ENCODE measurements at regions of chr19 and their contacts with region 1.

Region 1: DNA sequence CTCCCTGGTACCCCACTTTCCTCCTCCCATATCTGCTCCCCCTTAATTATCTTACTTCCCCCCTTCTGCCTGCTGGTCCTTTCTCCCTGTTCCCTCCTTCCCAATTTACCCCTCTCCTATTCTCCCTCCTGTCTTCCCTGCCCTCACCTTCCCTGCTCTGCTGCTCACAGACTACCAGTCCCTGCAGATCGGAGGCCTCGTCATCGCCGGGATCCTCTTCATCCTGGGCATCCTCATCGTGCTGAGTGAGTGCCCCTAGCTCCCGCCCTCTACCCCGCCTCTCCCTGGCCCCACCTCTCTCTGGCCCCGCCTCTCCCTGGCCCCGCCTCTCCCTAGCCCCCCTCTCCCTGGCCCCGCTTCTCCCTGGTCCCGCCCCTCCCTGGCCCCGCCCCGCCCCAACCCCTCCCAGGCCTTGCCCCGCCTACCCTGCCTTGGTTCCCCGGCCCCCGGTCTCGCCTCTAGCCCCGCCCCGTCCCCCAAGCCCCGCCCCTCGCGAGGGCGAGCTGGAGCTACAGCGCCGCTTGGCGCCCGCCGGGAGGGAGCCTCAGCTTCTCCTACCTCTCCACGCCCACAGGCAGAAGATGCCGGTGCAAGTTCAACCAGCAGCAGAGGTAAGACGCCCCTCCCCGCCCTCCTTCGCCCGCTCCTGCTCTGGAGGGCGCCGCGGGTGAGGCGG is 2.0 kb upstream of the FXYD7 start:
- DNase-seq: peak; percentile 78
- H3K4me3 ChIP-seq: peak overlapping the region; percentile 29; the same call in 1 of the 2 replicates
- H3K27ac ChIP-seq: no peak overlapping the region
- H3K27me3 ChIP-seq: peaks cover 25% of the 10 kb centered on the region
- CTCF ChIP-seq: peak; percentile 45

Region 2: DNA sequence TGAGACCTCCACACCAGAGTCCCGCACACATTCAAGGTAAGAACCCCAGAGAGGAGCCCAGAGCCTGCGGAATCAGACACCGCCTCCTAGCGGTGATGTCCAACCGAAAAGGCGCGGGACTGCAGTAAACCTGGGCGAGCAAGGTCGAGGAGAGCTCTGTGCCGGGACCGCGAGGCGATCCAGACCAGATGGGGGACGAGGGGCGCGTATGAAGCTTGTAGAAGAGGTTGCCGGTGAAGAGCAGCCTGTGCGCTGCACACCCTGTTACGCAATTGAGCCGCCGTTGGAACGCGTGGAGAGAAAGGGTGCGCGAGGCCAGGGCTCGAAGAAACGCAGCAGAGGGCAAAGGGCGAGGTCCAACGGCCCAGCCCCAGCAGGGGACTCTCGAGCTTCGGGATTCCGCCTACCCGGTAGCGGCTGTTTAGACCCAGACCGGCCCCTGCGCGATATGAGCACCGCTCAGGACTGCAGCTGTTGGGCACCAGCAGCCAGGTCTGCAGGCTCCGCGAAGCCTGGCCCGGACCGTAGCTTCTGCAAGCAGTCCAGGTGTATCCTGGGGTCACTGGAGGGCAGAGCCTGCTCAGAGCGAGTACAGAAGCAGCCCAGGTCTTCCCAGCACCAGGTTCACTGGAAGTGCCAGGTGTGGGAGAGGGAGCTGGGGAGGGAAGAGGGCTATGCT is 302.2 kb before region 1 on chr19:
- CTCF ChIA-PET with region 1: no interaction called
- POLR2A ChIA-PET with region 1: no interaction called
- DNase-seq: no peak
- H3K4me3 ChIP-seq: no peak overlapping the region
- H3K27ac ChIP-seq: no peak overlapping the region
- H3K27me3 ChIP-seq: no peaks in the 10 kb centered on the region
- CTCF ChIP-seq: peak; percentile 42

Region 3: DNA sequence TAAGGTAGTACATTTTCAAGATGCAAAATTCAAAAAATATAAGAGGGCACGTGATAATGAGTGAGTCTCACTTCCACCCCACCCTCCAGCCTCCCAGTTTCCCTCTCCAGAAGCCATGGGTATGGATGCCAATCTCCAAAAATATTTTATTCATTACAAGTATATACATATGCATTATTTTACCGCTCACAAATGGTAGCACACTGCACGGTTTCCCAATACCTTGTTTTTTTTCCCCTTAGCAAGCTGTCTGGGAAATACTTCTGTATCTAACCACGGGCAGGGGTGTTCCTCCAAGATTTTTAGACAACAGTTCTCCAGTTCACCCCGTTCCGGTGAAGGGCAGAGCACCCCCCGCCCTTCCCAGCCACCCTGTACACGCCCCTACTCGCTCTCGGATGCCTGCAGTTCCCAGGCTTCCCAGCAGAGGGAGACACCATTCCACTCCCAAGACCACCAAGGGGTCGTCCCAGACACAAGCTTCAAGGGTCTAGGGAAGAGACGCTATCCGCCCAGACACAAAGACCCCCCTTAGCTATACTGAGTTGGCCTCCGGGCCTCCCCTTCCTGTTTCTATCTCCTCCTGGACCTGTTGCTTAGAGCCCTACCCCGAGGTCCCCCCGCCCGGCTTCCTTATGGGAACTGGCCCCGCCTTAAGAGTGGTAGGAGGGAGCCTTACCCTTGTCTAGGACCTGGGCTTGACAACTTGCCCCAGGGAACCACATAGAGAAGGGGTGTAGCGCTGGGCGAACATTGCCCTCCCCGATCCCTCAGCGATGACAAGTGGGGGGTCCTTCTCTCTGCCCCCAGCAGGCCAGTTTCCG is 26.5 kb before region 1 on chr19:
- CTCF ChIA-PET with region 1: interaction called, 42 read pairs
- POLR2A ChIA-PET with region 1: no interaction called
- DNase-seq: no peak
- H3K4me3 ChIP-seq: no peak overlapping the region
- H3K27ac ChIP-seq: no peak overlapping the region
- H3K27me3 ChIP-seq: peaks cover 7% of the 10 kb centered on the region
- CTCF ChIP-seq: peak; percentile 98

Region 4: DNA sequence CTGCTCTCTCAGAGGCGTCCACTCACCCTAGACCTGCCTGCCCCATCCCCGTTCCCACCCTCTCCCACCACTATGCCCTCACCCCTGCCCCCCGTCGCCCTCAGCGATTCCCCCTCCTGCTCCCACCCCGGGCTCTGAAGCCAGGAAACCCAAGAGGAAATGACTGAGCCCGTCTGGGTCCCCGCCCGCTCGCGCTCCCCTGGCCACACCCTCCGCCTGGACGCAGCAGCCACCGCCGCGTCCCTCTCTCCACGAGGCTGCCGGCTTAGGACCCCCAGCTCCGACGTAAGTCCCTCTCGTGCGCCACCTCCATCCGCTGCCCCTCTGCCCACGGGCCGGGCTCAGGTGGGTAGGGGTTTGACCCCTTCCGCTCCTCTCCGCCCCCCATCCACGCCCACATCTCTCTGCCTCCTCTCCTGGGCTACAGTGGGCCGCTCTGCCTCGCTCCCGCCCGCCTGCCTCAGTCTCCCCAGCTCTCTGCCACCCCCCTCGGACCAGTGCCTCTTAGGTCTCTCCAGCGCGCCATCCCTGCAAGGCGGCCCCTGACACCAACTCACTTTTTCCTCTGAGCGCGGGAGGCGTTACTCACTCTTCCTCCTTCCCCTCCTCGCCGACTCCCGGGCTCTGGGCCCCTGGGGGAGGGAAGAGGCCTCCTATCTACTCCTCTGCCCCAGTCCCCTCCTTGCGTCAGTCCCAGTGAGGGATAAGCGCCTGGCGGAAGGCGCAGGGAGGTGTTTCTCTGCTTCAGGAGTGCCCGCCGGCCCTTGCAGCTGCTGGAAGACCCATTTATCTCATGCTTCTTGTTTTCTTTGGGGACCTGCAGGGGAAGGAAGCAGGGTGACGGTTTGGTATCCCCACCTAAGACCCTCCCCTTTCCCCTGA is 13.7 kb after region 1 on chr19 and contains the start of gene FXYD5:
- CTCF ChIA-PET with region 1: interaction called, 83 read pairs
- POLR2A ChIA-PET with region 1: interaction called, 3 read pairs
- DNase-seq: peak; percentile 27
- H3K4me3 ChIP-seq: peak within 1 kb of the TSS; percentile 92
- H3K27ac ChIP-seq: no peak within 1 kb of the TSS
- H3K27me3 ChIP-seq: no peaks in the 10 kb centered on the region
- CTCF ChIP-seq: peak; percentile 18
- polyA plus RNA-seq, gene FXYD5: 80.3 and 100 TPM in 2 replicates

Region 5: DNA sequence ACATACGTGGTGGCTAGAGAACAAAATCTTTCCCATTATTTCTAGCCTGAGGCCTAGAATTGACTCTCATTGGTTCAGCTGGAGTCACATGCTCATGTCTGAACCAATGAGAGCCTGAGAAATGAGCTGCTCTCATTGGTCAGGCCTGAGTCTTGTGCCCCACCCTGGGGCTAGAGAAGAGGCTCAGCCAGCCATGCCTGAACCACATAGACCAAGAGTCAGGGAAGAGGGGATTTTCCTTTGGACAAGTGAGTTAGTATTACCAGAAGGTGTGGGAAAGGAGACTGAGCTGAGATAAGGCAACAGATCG is 20.3 kb after region 1 on chr19:
- CTCF ChIA-PET with region 1: interaction called, 11 read pairs
- POLR2A ChIA-PET with region 1: no interaction called
- DNase-seq: no peak
- H3K4me3 ChIP-seq: no peak overlapping the region
- H3K27ac ChIP-seq: no peak overlapping the region
- H3K27me3 ChIP-seq: no peaks in the 10 kb centered on the region
- CTCF ChIP-seq: no peak

Region 6: DNA sequence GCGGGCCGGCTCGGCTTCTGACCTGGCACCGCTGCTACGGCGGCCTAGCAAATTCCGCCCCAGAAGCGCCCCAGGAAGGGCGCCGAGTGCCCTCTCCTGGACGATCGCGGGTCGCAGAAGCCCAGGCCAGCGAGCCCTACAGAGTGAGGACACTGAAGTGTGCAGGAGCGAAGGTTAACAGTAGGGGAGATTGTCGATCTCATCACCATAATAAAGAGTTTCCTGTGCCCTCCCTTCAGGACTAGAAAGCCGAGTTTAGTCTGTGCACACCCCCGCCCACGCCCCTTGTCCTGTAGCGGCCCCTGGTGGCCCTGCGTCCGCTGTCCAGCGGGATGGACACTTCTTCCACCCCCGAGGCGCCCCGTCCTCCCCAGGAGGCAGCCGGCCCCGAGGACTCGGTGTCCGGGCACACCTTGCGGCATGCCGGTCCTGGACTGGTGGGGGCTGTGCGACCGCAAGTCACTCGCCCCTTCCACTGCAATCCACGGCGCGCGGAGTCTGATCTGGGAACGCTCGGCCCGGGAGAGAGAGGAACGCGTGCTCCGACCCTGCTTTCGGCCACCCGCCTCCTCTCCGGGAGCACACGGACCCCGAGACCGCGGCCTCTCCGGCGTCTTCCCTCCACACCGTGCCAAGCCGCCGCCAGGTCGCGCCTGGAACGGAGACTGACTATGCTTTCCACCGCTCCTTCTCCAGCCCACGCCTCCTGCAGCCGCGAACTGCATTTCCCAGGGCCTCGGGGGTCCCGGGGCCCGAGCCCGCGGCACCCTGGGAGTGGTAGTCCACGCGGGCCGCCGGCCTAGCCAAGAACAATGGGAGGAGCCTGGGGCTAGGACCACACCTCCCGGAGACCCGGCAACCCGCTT is 575.9 kb after region 1 on chr19:
- CTCF ChIA-PET with region 1: no interaction called
- POLR2A ChIA-PET with region 1: no interaction called
- DNase-seq: peak; percentile 84
- H3K4me3 ChIP-seq: peak overlapping the region; percentile 84
- H3K27ac ChIP-seq: peak overlapping the region; percentile 57
- H3K27me3 ChIP-seq: no peaks in the 10 kb centered on the region
- CTCF ChIP-seq: peak; percentile 85

Measured in AG04450 (cell line).